ENCODE measurements at regions of chr17 and their contacts with region 1.

Region 1: GRCh38 chr17:79991140-79991923 is 44.3 kb downstream of the TBC1D16 start:
- DNase-seq: peak; percentile 92
- H3K4me3 ChIP-seq: peak overlapping the region; percentile 50
- H3K27ac ChIP-seq: no peak overlapping the region
- H3K4me1 ChIP-seq: peaks cover 34% of the 10 kb centered on the region
- H3K27me3 ChIP-seq: no peaks in the 10 kb centered on the region

Region 2: GRCh38 chr17:79789534-79790353 is 201.6 kb before region 1 on chr17:
- in situ Hi-C with region 1: loop called (anchors 10 kb)
- DNase-seq: peak; percentile 64
- H3K4me3 ChIP-seq: no peak overlapping the region
- H3K27ac ChIP-seq: no peak overlapping the region
- H3K4me1 ChIP-seq: no peaks in the 10 kb centered on the region
- H3K27me3 ChIP-seq: peaks cover 55% of the 10 kb centered on the region

Region 3: DNA sequence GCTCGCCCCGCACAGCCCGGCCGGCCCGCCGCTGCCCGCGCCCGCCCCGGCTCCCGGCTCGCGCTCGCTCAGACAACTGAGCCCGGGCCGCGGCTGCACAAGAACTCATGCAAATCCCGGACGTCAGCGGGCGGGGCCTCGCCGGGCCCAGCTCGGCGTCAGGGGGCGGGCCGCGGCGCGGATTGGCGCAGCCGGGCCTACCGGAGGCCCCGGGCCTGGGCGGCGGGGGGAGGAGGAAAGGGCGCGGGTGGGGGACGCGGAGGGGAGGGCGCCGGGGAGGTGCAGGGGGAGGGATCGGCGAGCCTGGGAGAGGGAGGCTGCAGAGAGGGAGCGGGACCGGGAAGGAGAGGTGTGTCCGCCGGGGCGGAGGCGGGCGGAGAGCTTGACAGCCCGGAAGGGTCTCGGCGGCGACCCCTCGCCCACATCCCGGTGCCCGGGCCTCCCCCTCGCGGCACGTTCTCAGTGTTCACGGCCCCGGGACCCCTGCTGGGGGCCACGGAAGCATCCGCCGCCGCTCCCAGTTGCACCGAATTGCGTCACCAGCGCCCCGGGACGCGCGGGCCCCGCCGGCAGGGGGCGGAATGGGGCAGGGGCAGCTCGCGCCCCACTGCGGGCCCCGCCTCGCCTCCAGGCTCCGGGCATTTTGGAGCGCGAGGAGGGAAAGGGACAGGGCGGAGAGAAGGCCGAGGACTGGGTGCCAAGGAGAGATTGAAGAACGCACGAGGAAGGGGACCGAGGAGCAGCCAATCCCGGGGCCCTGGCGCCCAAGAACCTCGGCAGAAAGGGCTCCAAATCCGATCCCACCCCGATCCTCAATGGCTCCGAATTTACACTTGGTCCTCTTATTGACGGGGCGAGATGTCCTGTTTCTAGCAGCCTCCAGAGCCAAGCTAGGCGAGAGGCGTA is 151.7 kb before region 1 on chr17 and contains the start of gene CBX4:
- in situ Hi-C with region 1: loop called (anchors 10 kb)
- DNase-seq: peak; percentile 97
- H3K4me3 ChIP-seq: peak within 1 kb of the TSS; percentile 80
- H3K27ac ChIP-seq: peak within 1 kb of the TSS; percentile 72
- H3K4me1 ChIP-seq: peaks cover 6% of the 10 kb centered on the region
- H3K27me3 ChIP-seq: peaks cover 29% of the 10 kb centered on the region
- total RNA-seq, gene CBX4: 11.4 and 18.9 TPM in 2 replicates

Region 4: DNA sequence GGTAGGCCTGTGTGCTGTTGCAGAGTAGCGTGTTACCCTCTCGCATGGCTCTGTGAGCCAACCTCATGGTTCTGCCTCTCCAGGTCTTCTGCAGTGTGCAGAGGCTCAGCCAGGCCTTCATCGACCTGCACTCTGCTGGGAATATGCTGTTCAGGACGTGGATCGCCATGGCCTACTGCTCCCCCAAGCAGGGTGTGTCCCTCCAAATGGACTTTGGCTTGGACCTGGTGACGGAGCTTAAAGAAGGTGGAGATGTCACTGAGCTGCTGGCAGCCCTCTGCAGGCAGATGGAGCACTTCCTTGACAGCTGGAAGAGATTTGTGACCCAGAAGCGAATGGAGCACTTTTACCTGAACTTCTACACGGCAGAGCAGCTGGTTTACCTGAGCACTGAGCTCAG is 347.8 kb after region 1 on chr17:
- in situ Hi-C with region 1: no loop called
- DNase-seq: no peak
- H3K4me3 ChIP-seq: no peak overlapping the region
- H3K27ac ChIP-seq: no peak overlapping the region
- H3K4me1 ChIP-seq: no peaks in the 10 kb centered on the region
- H3K27me3 ChIP-seq: no peaks in the 10 kb centered on the region